ENCODE measurements at regions of chr4 and their contacts with region 1.

Region 1: DNA sequence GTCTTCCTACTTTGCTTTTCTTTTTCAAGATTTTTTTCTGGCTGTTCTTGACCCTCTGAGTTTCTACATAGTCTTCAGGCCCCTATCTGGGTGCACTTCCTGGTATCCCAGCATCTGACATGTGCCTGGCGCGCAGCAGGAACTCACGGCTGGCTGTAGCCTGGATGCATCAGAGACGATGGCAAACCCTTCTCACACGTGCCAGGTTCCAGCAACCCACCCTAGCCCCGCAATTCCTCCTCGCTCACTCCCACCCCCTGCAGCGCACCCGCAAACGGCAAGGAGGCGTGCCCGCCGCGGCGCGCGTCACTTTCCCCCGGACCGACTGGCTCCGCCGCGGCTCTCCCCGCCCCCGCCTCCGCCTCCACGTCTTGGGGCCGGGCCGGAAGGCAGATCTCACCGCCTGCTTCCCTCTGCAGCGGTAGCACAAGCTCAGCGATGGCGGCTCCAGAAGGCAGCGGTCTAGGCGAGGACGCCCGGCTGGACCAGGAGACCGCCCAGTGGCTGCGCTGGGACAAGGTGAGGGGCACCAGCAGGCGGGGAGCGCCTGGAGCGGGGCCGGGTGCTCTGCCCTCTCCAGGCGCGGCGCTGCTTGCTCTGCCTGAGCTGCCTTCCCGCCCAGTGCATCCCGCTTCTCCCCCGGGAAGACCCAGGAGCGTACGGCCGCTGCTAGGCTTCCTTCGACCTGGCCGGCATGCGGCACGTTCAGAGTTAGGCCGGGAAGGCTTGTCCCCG is at the start of gene PGM2:
- DNase-seq: peak; percentile 97
- ATAC-seq: peak; percentile 97
- total RNA-seq, gene PGM2: 13.1 TPM

Region 2: GRCh38 chr4:37885496-37885895 is 59.0 kb after region 1 on chr4:
- intact Hi-C with region 1: loop called (anchors 2 kb)
- DNase-seq: no peak
- ATAC-seq: peak; percentile 71

Region 3: GRCh38 chr4:37977471-37978247 is 151.2 kb after region 1 on chr4:
- intact Hi-C with region 1: loop called (anchors 5 kb)
- DNase-seq: peak; percentile 93
- ATAC-seq: peak; percentile 87

Region 4: GRCh38 chr4:38132107-38132673 is 305.7 kb after region 1 on chr4:
- intact Hi-C with region 1: no loop called
- DNase-seq: no peak
- ATAC-seq: peak; percentile 80